ENCODE measurements at regions of chr7 and their contacts with region 1.

Region 1: GRCh38 chr7:150448789-150449147 is 1.7 kb upstream of the GIMAP8 start:
- H3K4me3 Mint-ChIP-seq: no peak overlapping the region
- H3K27ac Mint-ChIP-seq: peak overlapping the region; percentile 46
- H3K4me1 Mint-ChIP-seq: peaks cover 61% of the 10 kb centered on the region
- H3K27me3 Mint-ChIP-seq: peaks cover 21% of the 10 kb centered on the region

Region 2: DNA sequence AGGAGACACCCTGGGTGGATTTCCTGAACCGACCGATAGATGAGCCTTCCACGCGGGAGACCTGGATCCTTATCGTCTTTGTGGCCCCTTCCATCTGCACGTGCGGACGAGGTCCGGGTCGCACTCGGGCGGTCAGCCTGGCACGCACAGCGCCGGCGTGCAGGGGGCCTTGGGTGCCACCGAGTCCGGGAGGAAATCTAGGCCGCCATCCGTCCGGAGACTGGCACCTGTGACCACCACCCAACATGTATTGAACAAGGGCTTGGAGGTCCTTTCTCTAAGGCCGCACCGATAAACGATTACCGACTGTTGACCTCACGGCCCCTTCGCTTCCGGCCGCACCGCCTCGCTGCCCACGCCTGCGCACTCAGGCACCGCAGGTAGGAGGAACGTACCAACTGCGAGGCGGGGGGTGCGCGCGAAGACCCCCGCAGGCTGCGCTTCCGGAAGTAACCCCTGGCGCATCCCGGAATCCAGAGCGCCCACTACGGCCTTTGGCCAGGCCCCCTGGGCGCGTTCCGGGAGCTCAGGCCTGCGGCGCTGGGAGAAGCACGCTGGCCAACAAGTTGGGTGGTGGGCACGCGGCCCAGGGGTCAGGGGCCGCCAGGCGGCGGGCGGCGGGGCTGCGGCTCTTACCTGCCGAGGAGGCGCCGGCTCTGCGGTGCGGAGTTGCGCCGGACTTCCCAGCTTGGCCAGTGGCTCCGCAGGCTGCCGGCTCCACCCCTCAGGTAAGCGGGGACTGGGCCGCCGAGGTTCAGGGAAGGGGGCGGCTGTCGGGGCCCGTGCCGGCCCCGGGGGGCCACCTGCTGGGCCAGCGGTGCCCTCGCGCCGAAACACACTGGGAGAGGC is 125.7 kb before region 1 on chr7 and contains the starts of genes ACTR3C and LRRC61:
- intact Hi-C with region 1: no loop called
- H3K4me3 Mint-ChIP-seq: peak within 1 kb of the TSS; percentile 76
- H3K27ac Mint-ChIP-seq: peak within 1 kb of the TSS; percentile 63
- H3K4me1 Mint-ChIP-seq: peaks cover 58% of the 10 kb centered on the region
- H3K27me3 Mint-ChIP-seq: peaks cover 18% of the 10 kb centered on the region

Region 3: DNA sequence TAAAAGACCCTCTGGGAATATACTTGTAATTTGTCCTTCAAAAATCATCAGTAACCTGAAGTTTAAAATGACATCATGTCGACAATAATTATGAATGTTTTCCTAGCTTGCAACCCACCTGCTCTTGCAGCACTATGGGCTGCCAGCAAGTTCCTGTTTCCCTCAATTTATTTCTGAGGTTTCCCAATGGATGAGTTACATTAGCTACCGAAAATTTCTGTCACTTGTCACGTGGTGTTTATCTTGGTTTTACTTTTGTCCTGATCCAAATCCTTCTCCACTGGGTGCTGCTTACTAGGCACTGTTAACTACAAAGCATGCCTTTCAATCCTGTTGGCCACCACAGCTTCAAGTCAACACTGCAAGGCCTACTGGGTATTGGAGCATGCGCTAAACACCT is 33.2 kb after region 1 on chr7:
- intact Hi-C with region 1: loop called (anchors 2 kb)
- H3K4me3 Mint-ChIP-seq: no peak overlapping the region
- H3K27ac Mint-ChIP-seq: peak overlapping the region; percentile 89
- H3K4me1 Mint-ChIP-seq: peaks cover 76% of the 10 kb centered on the region
- H3K27me3 Mint-ChIP-seq: no peaks in the 10 kb centered on the region

Region 4: DNA sequence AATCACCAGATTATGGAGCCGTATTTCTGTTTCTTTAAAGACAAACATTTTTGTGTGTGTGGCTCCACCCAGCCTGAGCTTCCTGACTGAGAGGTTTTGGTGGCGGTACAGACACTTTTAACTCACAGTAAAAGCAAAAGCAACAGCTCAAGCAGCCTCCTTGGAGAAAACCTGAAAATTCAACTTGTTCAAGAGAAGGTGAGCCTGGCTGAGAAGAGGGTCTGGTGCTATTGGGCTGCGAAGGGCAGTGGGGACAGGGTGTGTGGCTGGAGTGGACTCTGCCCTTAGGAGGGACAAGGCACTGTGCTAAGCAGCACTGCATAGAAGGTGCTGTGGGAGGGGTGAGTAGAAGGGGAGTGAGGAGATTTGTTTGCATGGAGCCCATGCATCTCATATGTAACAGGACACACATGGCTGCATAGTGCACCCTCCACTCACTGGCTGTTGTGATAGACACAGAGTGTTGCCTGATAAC is 66.0 kb after region 1 on chr7 and contains the start of gene GIMAP7:
- intact Hi-C with region 1: loop called (anchors 10 kb)
- H3K4me3 Mint-ChIP-seq: peak within 1 kb of the TSS; percentile 95
- H3K27ac Mint-ChIP-seq: peak within 1 kb of the TSS; percentile 97
- H3K4me1 Mint-ChIP-seq: peaks cover 30% of the 10 kb centered on the region
- H3K27me3 Mint-ChIP-seq: no peaks in the 10 kb centered on the region

Region 5: DNA sequence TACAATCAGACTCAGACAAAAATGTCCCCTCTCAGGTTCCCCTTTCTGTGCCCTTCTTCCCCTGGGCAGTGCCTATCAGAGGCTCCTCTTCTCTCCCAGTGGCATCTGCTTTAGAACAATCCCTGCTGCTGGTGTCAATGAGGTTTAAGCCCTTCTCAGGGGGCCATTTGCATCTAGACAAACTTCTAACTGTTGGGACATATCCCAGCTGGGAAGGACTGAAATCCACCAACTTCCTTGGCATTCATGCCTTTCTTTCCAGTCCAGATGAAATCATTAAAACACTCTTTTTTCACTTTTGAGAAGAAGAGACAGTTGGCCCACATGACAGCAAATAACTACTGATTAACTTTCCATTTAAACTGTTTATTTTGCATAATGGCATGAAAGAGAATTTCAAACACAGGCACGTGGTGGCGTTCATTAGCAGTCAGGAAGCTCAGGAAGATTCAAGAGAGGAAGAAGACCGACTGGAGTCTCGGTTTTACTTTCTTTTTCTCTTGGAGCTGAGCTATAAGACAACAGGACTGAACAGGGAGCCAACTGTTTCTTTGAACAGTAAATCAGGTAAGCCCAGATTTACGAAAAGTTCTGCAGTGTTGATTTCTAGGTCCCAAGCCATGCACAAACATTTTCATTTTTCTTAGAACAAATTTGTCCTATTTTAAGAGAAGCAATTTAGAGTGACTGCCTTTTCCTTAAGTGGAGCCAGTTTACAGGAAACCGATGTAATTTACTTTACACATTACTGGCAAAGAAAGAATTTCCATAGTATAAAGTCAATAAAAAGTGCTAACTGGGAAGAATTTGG is 236.7 kb after region 1 on chr7 and contains the start of gene GIMAP2:
- intact Hi-C with region 1: loop called (anchors 5 kb)
- H3K4me3 Mint-ChIP-seq: peak within 1 kb of the TSS; percentile 92
- H3K27ac Mint-ChIP-seq: peak within 1 kb of the TSS; percentile 93
- H3K4me1 Mint-ChIP-seq: peaks cover 60% of the 10 kb centered on the region
- H3K27me3 Mint-ChIP-seq: no peaks in the 10 kb centered on the region

Region 6: GRCh38 chr7:150756858-150757257 is 308.1 kb after region 1 on chr7:
- intact Hi-C with region 1: loop called (anchors 1 kb)
- H3K4me3 Mint-ChIP-seq: no peak overlapping the region
- H3K27ac Mint-ChIP-seq: no peak overlapping the region
- H3K4me1 Mint-ChIP-seq: peaks cover 28% of the 10 kb centered on the region
- H3K27me3 Mint-ChIP-seq: peaks cover 2% of the 10 kb centered on the region